CD4-positive, alpha-beta T cell (primary cell): ENCODE measurements at regions of chrX and their contacts with region 1.

Region 1: DNA sequence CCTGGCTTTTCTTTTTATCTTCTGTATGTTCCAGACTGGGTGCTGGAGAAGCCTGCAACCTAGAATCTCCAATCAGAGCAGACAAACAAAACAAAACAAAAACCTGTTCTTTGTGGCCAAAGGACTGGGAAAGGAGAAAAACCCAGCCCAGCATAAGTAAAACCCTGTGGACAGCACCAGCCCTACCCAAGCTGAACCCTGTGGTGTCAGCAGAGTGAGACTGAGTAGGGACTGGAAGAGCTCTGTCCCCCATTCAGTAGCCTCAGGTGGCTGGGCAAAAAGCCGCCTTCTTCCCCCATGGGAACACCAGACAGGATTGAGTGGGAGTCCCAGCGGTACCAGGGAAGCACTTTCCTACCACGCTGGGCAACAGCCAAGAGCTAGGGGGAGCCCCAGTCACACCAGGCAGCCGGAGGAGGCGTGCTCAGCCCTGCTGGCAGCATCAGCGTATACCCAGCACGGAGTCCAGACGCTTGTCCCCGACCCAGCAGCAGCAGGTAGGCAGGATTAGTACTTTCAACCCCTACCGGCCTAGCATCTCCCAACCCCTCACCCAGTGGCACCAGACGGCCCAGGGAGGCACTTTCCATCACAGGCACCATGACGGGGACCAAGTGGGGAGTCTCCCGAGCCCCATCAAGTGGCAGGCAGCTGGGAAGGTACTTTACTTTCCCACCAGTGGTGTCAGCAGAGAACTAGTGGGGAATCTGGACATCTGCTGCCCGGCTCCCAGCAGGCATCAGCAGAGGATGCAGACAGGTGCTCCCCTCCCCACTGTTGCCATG is 8.6 kb upstream of the JADE3 start:
- DNase-seq: peak; percentile 15 to 75 (median 42)
- ATAC-seq: peak; percentile 85
- H3K4me3 ChIP-seq: peak overlapping the region; percentile 31
- H3K4me3 Mint-ChIP-seq: peak overlapping the region; percentile 38
- H3K27ac ChIP-seq: no peak overlapping the region
- H3K27ac Mint-ChIP-seq: no peak overlapping the region
- H3K4me1 ChIP-seq: peaks cover 8% of the 10 kb centered on the region
- H3K4me1 Mint-ChIP-seq: no peaks in the 10 kb centered on the region
- H3K27me3 ChIP-seq: peaks cover 0 to 3% of the 10 kb centered on the region in 2 experiments
- H3K27me3 Mint-ChIP-seq: no peaks in the 10 kb centered on the region
- CTCF ChIP-seq: peak; percentile 50

Region 2: DNA sequence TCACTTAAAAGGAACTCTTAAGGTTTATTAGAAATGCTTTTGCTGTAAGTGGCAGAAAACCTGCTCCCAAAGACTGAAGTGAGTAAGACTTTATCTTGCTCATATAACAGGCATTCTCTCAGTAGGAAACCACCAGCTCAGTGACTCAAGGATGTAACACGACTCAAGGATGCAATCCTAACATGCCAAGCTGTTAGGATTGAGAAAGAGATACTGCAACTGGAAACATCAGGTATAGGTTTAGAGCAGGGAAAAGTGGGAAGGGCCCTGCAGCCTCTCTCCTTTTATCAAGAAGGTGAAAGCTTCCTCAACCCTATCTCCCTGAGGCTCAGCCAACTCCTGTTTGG is 132.9 kb before region 1 on chrX:
- CTCF ChIA-PET with region 1: no interaction called
- POLR2A ChIA-PET with region 1: no interaction called
- intact Hi-C with region 1: no loop called
- DNase-seq: no peak
- ATAC-seq: no peak
- H3K4me3 ChIP-seq: no peak overlapping the region
- H3K4me3 Mint-ChIP-seq: no peak overlapping the region
- H3K27ac ChIP-seq: no peak overlapping the region
- H3K27ac Mint-ChIP-seq: no peak overlapping the region
- H3K4me1 ChIP-seq: no peaks in the 10 kb centered on the region
- H3K4me1 Mint-ChIP-seq: no peaks in the 10 kb centered on the region
- H3K27me3 ChIP-seq: no peaks in the 10 kb centered on the region
- H3K27me3 Mint-ChIP-seq: peaks cover 3% of the 10 kb centered on the region
- CTCF ChIP-seq: no peak

Region 3: DNA sequence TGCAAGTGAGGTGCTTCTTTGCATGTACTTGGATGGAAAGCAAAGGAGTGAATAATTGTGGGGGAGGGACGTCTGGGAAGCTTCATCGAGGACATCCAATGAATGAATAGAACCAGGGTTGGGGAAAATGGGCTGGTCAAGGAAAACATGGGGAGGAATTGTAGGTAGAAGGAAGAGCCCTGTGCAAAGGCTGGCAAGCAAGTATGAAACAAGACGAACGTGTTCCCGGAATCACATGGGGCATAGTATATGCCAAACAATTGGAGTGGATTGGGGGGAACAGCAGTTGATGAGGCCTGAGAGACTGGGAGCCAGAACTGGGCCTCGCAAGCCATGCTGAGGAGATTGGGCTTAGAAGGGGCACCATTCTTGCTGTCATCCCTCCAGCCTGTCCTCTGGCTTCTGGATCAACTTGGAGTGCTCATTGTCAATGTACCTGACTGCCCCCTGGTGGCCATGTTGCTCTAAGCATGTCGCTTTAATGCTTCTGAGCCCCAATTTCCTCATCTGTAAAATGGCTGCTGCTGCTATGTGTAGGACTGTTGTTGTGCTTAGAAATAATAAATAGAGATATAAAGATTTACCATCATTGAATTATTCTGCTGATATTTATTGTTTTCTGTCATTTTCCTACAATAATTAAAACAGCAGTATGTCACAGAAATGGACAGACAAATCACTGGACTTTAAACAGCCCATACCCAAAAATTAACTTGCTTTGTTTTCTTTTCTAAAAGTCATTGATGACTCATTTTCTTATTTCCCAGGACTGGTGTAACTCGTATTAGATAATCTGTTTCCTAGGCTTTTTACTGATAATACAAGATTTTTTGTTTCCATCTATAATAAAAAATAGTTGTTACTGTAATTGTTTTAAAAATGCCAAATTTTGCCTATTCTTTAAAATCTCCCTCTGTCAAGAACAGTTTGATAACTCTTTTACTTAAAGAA is 75.0 kb after region 1 on chrX:
- CTCF ChIA-PET with region 1: no interaction called
- POLR2A ChIA-PET with region 1: no interaction called
- intact Hi-C with region 1: loop called in 1 of 2 experiments (anchors 2 kb)
- DNase-seq: peak; percentile 37 to 80 (median 60)
- ATAC-seq: no peak
- H3K4me3 ChIP-seq: no peak overlapping the region
- H3K4me3 Mint-ChIP-seq: no peak overlapping the region
- H3K27ac ChIP-seq: no peak overlapping the region
- H3K27ac Mint-ChIP-seq: no peak overlapping the region
- H3K4me1 ChIP-seq: no peaks in the 10 kb centered on the region
- H3K4me1 Mint-ChIP-seq: no peaks in the 10 kb centered on the region
- H3K27me3 ChIP-seq: no peaks in the 10 kb centered on the region
- H3K27me3 Mint-ChIP-seq: no peaks in the 10 kb centered on the region
- CTCF ChIP-seq: peak; percentile 40

Region 4: GRCh38 chrX:47030339-47030738 is 126.7 kb after region 1 on chrX:
- CTCF ChIA-PET with region 1: interaction called, 4 read pairs
- POLR2A ChIA-PET with region 1: no interaction called
- intact Hi-C with region 1: loop called (anchors 2 to 5 kb)
- DNase-seq: peak in 4 of 14 experiments; percentile 27 to 60 (median 52)
- ATAC-seq: no peak
- H3K4me3 ChIP-seq: no peak overlapping the region
- H3K4me3 Mint-ChIP-seq: no peak overlapping the region
- H3K27ac ChIP-seq: no peak overlapping the region
- H3K27ac Mint-ChIP-seq: no peak overlapping the region
- H3K4me1 ChIP-seq: no peaks in the 10 kb centered on the region
- H3K4me1 Mint-ChIP-seq: no peaks in the 10 kb centered on the region
- H3K27me3 ChIP-seq: no peaks in the 10 kb centered on the region
- H3K27me3 Mint-ChIP-seq: no peaks in the 10 kb centered on the region
- CTCF ChIP-seq: peak; percentile 65

Region 5: DNA sequence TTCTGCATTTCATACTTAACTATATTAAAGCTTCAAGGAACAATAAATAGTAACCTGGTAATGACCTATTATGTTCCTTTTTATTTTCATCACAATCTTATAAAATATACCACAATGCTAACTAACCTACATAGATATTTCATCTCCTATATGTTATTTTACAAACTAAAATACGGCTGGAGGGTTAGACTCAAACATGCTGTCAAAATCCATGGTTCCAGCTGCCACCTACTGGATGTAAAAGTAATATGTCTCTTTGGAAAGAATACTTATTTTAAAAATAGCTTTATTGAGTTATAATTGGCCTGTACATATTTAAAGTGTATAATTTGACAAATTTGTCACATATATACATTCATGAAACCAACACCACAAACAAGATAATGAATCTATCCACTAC is 189.6 kb after region 1 on chrX:
- CTCF ChIA-PET with region 1: no interaction called
- POLR2A ChIA-PET with region 1: no interaction called
- intact Hi-C with region 1: loop called in 1 of 2 experiments (anchors 10 kb)
- DNase-seq: peak in 4 of 14 experiments; percentile 7 to 35 (median 22)
- ATAC-seq: no peak
- H3K4me3 ChIP-seq: no peak overlapping the region
- H3K4me3 Mint-ChIP-seq: no peak overlapping the region
- H3K27ac ChIP-seq: no peak overlapping the region
- H3K27ac Mint-ChIP-seq: no peak overlapping the region
- H3K4me1 ChIP-seq: no peaks in the 10 kb centered on the region
- H3K4me1 Mint-ChIP-seq: peaks cover 16% of the 10 kb centered on the region
- H3K27me3 ChIP-seq: no peaks in the 10 kb centered on the region
- H3K27me3 Mint-ChIP-seq: no peaks in the 10 kb centered on the region
- CTCF ChIP-seq: peak; percentile 39